ENCODE measurements at regions of chr1 and their contacts with region 1.

Region 1: DNA sequence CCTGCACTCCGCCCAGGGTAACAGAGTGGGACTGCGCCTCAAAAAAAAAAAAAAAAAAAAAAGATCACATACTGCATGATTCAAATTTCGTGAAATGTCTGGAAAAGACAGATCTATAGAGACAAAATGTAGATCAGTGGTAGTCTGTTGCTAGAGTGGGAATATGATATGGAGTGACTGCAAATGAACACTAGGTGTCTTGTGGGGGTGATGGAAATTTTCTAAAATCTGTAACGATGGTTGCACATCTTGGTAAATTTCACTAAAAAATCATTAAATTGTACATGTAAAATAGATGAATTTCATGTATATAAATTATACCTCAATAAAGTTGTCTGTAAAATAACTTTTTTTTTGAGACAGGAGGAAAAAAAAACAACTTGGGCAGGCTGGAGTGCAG is 5.5 kb downstream of the AIDA start:
- DNase-seq: no peak
- ATAC-seq: no peak

Region 2: DNA sequence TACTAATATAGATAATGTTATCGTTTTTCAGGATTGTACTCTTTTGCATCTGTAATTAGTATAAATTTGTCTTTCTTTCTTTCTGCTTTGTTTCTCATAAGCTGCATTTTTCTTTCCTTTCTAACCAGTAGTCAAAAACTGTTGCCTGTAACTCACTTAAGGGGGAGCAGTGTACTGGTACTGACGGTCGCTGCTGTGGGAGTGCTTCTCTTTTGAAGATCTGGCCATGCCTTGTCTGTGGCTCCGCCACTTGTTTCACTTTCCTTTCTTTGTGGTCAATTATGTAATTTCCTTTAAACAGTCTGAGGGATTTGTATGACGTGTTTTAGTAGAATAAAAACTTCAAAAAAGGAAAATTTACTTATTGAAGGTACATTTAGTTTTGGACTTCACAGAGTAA is 52.0 kb before region 1 on chr1:
- intact Hi-C with region 1: loop called in 1 of 2 experiments (anchors 5 kb)
- DNase-seq: peak in 1 of 2 donors; percentile 34
- ATAC-seq: peak; percentile 37